ENCODE measurements at regions of chr3 and their contacts with region 1.

Region 1: GRCh38 chr3:97863775-97864174 is 42.0 kb downstream of the CRYBG3 start:
- DNase-seq: no peak
- ATAC-seq: no peak
- H3K4me3 ChIP-seq: no peak overlapping the region
- H3K27ac ChIP-seq: no peak overlapping the region
- H3K4me1 ChIP-seq: peaks cover 3% of the 10 kb centered on the region; the same call in 1 of the 2 replicates
- H3K27me3 ChIP-seq: no peaks in the 10 kb centered on the region
- CTCF ChIP-seq: no peak
- POLR2A ChIP-seq: no peak
- RAD21 ChIP-seq: no peak

Region 2: DNA sequence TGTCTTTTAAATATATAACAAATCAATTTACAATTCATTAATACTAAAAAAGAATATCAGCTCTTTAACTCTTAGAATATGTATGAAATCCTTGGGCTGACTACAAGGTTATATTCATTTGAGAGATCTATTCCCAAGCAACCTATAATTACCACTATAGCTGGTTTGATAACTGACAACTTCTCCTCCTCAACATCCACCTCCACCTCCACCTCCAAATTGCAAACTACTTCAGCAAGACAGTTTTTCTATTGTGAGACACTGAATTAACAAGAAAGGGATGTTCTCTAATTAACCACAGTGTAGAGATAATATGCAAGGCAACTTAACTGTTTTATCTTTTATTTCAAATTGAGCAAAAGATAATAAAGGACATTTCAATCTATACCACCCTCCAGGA is 384.0 kb before region 1 on chr3:
- CTCF ChIA-PET with region 1: no interaction called
- POLR2A ChIA-PET with region 1: no interaction called
- dilution Hi-C with region 1: no loop called
- in situ Hi-C with region 1: no loop called
- intact Hi-C with region 1: no loop called
- DNase-seq: no peak
- ATAC-seq: no peak
- H3K4me3 ChIP-seq: no peak overlapping the region
- H3K27ac ChIP-seq: no peak overlapping the region
- H3K4me1 ChIP-seq: no peaks in the 10 kb centered on the region
- H3K27me3 ChIP-seq: no peaks in the 10 kb centered on the region
- CTCF ChIP-seq: no peak
- POLR2A ChIP-seq: no peak
- RAD21 ChIP-seq: no peak

Region 3: GRCh38 chr3:97917813-97918536 is 54.2 kb after region 1 on chr3:
- CTCF ChIA-PET with region 1: no interaction called
- POLR2A ChIA-PET with region 1: interaction called, 26 read pairs
- dilution Hi-C with region 1: no loop called
- in situ Hi-C with region 1: no loop called
- intact Hi-C with region 1: no loop called
- DNase-seq: peak; percentile 69
- ATAC-seq: peak; percentile 82
- H3K4me3 ChIP-seq: no peak overlapping the region
- H3K27ac ChIP-seq: no peak overlapping the region
- H3K4me1 ChIP-seq: no peaks in the 10 kb centered on the region
- H3K27me3 ChIP-seq: no peaks in the 10 kb centered on the region
- CTCF ChIP-seq: no peak
- POLR2A ChIP-seq: no peak
- RAD21 ChIP-seq: no peak

Measured in IMR-90 (cell line).